Caco-2 (cell line): ENCODE measurements at regions of chr11 and their contacts with region 1.

Region 1: GRCh38 chr11:61917341-61918109 is at the start of gene RAB3IL1:
- DNase-seq: peak; percentile 70 to 87
- H3K4me3 ChIP-seq: peak within 1 kb of the TSS; percentile 68
- H3K4me3 Mint-ChIP-seq: peak within 1 kb of the TSS; percentile 98
- H3K27ac Mint-ChIP-seq: peak within 1 kb of the TSS; percentile 71
- H3K4me1 ChIP-seq: peaks cover 24% of the 10 kb centered on the region
- H3K4me1 Mint-ChIP-seq: peaks cover 27% of the 10 kb centered on the region
- H3K27me3 ChIP-seq: no peaks in the 10 kb centered on the region
- H3K27me3 Mint-ChIP-seq: no peaks in the 10 kb centered on the region
- CTCF ChIP-seq: no peak
- total RNA-seq, gene RAB3IL1: 8.3 and 10.6 TPM in 2 replicates

Region 2: GRCh38 chr11:61037694-61038093 is 879.8 kb before region 1 on chr11:
- CTCF ChIA-PET with region 1: no interaction called
- POLR2A ChIA-PET with region 1: no interaction called
- intact Hi-C with region 1: loop called (anchors 10 kb)
- DNase-seq: no peak
- H3K4me3 ChIP-seq: no peak overlapping the region
- H3K4me3 Mint-ChIP-seq: no peak overlapping the region
- H3K27ac Mint-ChIP-seq: no peak overlapping the region
- H3K4me1 ChIP-seq: peaks cover 4% of the 10 kb centered on the region; the same call in 1 of the 2 replicates
- H3K4me1 Mint-ChIP-seq: no peaks in the 10 kb centered on the region
- H3K27me3 ChIP-seq: no peaks in the 10 kb centered on the region
- H3K27me3 Mint-ChIP-seq: no peaks in the 10 kb centered on the region
- CTCF ChIP-seq: no peak

Region 3: DNA sequence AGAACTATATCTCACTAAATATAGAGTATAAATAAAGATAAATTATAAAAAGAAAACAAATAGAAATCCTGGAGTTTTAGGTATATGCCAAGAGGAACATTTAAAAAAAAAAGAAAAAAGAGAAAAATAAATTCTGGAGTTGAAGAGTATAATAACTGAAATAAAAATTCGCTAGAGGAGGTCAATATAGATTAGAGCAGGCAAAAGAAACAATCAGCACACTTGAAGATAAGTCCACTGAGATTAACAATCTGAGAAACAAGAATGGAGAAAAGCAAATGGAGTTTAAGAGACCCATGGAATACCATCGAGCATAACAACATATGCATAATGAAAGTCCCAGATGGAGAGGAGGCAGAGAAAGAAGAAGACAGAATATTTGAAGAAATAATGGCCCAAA is 18.3 kb after region 1 on chr11:
- CTCF ChIA-PET with region 1: no interaction called
- POLR2A ChIA-PET with region 1: no interaction called
- intact Hi-C with region 1: no loop called
- DNase-seq: no peak
- H3K4me3 ChIP-seq: no peak overlapping the region
- H3K4me3 Mint-ChIP-seq: no peak overlapping the region
- H3K27ac Mint-ChIP-seq: no peak overlapping the region
- H3K4me1 ChIP-seq: no peaks in the 10 kb centered on the region
- H3K4me1 Mint-ChIP-seq: no peaks in the 10 kb centered on the region
- H3K27me3 ChIP-seq: no peaks in the 10 kb centered on the region
- H3K27me3 Mint-ChIP-seq: peaks cover 8% of the 10 kb centered on the region
- CTCF ChIP-seq: no peak